Esophagus muscularis mucosa (tissue), 4 donors: ENCODE measurements at regions of chr7 and their contacts with region 1.

Region 1: DNA sequence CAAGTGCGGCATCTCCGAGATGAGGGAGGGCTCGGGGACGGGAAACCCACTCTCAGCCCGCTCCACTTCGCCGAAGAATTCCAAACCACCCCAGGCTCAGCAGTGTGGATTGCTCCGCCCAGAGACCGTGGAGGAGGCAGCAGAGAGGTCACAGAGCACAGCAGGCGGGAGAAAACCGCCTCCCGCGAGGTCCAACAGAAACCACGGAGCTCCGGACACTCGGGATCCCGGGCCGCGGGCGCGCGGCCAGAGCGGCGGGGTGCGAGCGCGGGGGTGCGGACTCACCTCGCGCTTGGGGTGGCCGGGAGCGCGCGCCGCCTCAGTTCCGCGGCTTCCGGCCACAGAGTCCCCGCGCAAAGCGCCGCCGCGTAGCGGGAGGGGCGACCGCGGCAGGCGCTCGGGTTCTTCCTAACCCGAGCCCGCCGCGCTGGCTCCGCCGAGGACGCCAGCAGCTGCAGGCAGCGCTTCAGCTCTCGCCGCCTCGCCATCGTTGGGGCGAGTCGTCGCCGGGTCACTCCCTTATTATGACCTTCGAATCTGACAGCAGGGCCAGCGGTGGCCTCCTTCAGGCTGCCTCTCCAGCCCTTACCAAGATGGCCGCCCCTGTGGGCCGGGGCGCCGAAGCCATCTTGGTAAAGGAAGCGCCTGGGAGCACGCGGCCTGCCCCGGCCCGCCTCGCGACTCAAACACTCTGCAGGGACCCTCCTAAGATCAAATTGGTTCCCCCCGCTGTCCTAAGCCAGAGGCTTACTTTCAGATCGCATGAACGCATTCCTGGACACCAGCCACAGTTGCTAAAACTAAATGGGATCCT is at the start of gene NAPEPLD:
- DNase-seq: peak; percentile 94
- H3K4me3 ChIP-seq: peak within 1 kb of the TSS; percentile 68 to 85 (median 82)
- H3K27ac ChIP-seq: peak within 1 kb of the TSS; percentile 92 to 96 (median 95)
- H3K4me1 ChIP-seq: peaks cover 13 to 31% (median 26%) of the 10 kb centered on the region in 4 donors
- H3K27me3 ChIP-seq: no peaks in the 10 kb centered on the region
- CTCF ChIP-seq: no peak
- EP300 ChIP-seq: no peak
- POLR2A ChIP-seq: no peak
- total RNA-seq, gene NAPEPLD: 4.7 to 8.7 (median 6.1) TPM

Region 2: GRCh38 chr7:102942181-102942866 is 206.9 kb before region 1 on chr7:
- intact Hi-C with region 1: no loop called
- DNase-seq: no peak
- H3K4me3 ChIP-seq: no peak overlapping the region
- H3K27ac ChIP-seq: no peak overlapping the region
- H3K4me1 ChIP-seq: peaks cover 8 to 24% (median 13%) of the 10 kb centered on the region in 4 donors
- H3K27me3 ChIP-seq: no peaks in the 10 kb centered on the region
- CTCF ChIP-seq: no peak
- EP300 ChIP-seq: no peak
- POLR2A ChIP-seq: no peak

Region 3: DNA sequence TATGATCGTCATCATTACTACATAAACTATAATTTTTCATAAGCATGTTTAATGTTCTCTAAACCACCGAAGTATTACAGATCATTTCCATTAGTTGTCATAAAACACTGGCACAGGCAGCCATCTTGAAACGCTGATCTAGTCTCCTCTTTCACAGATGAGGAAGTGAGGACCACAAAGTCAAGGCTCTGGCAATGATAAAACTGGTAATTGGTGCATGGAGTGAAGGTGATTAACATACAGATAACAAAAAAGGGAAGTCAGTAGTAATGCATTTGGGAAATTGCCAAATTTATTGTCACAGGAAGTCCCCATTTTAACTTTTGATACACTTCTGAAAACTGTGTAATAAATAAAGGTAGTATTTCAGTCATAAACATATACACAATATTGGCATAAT is 123.9 kb before region 1 on chr7:
- intact Hi-C with region 1: no loop called
- DNase-seq: no peak
- H3K4me3 ChIP-seq: no peak overlapping the region
- H3K27ac ChIP-seq: no peak overlapping the region
- H3K4me1 ChIP-seq: no peaks in the 10 kb centered on the region
- H3K27me3 ChIP-seq: no peaks in the 10 kb centered on the region
- CTCF ChIP-seq: no peak
- EP300 ChIP-seq: no peak
- POLR2A ChIP-seq: no peak

Region 4: GRCh38 chr7:103074519-103075336 is 74.5 kb before region 1 on chr7 and contains the starts of genes ARMC10 and FBXL13:
- intact Hi-C with region 1: loop called (anchors 2 kb)
- DNase-seq: peak; percentile 98
- H3K4me3 ChIP-seq: peak within 1 kb of the TSS; percentile 77 to 94 (median 82)
- H3K27ac ChIP-seq: peak within 1 kb of the TSS; percentile 88 to 96 (median 93)
- H3K4me1 ChIP-seq: peaks cover 18 to 32% (median 30%) of the 10 kb centered on the region in 4 donors
- H3K27me3 ChIP-seq: no peaks in the 10 kb centered on the region
- CTCF ChIP-seq: peak; percentile 24 to 48 (median 27)
- EP300 ChIP-seq: no peak
- POLR2A ChIP-seq: no peak
- total RNA-seq, gene ARMC10: 28.8 to 41.2 (median 37.2) TPM
- total RNA-seq, gene FBXL13: 0.52 to 1.7 (median 1.1) TPM

Region 5: DNA sequence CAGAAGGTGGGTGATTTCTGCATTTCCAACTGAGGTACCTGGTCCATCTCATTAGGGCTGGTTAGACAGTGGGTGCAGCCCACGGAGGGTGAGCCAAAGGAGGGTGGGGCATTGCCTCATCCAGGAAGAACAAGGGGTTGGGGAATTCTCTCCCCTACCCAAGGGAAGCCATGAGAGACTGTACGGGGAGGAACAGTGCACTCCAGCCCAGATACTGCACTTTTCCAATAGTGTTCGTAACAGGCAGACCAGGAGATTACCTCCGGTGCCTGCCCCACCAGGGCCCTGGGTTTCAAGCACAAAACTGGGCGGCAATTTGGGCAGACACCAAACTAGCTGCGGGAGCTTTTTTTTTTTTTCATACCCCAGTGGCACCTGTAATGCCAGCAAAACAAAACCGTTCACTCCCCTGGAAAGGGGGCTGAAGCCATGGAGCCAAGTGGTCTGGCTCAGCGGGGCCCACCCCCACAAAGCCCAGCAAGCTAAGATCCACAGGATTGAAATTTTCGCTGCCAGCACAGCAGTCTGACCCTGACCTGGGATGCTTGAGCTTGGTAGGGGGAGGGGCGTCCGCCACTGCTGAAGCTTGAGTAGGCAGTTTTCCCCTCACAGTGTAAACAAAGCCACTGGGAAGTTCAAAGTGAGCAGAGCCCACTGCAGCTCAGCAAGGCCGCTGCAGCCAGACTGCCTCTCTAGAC is 43.0 kb before region 1 on chr7:
- intact Hi-C with region 1: no loop called
- DNase-seq: no peak
- H3K4me3 ChIP-seq: no peak overlapping the region
- H3K27ac ChIP-seq: no peak overlapping the region
- H3K4me1 ChIP-seq: peaks cover 0 to 10% (median 5%) of the 10 kb centered on the region in 4 donors
- H3K27me3 ChIP-seq: no peaks in the 10 kb centered on the region
- CTCF ChIP-seq: no peak
- EP300 ChIP-seq: no peak
- POLR2A ChIP-seq: no peak